ENCODE measurements at regions of chr21 and their contacts with region 1.

Region 1: GRCh38 chr21:46323227-46324128 is at the start of gene C21orf58:
- DNase-seq: peak; percentile 99
- ATAC-seq: peak; percentile 83 to 93 (median 83)
- H3K4me3 ChIP-seq: peak within 1 kb of the TSS; percentile 100
- H3K4me3 Mint-ChIP-seq: peak within 1 kb of the TSS; percentile 97
- H3K27ac ChIP-seq: peak within 1 kb of the TSS; percentile 100
- H3K27ac Mint-ChIP-seq: peak within 1 kb of the TSS; percentile 92 to 96
- H3K4me1 ChIP-seq: peaks cover 20% of the 10 kb centered on the region
- H3K4me1 Mint-ChIP-seq: peaks cover 24 to 27% of the 10 kb centered on the region in 2 donors
- H3K27me3 ChIP-seq: no peaks in the 10 kb centered on the region
- H3K27me3 Mint-ChIP-seq: no peaks in the 10 kb centered on the region
- CTCF ChIP-seq: no peak
- total RNA-seq, gene C21orf58: 4.0 to 8.9 (median 5.2) TPM

Region 2: DNA sequence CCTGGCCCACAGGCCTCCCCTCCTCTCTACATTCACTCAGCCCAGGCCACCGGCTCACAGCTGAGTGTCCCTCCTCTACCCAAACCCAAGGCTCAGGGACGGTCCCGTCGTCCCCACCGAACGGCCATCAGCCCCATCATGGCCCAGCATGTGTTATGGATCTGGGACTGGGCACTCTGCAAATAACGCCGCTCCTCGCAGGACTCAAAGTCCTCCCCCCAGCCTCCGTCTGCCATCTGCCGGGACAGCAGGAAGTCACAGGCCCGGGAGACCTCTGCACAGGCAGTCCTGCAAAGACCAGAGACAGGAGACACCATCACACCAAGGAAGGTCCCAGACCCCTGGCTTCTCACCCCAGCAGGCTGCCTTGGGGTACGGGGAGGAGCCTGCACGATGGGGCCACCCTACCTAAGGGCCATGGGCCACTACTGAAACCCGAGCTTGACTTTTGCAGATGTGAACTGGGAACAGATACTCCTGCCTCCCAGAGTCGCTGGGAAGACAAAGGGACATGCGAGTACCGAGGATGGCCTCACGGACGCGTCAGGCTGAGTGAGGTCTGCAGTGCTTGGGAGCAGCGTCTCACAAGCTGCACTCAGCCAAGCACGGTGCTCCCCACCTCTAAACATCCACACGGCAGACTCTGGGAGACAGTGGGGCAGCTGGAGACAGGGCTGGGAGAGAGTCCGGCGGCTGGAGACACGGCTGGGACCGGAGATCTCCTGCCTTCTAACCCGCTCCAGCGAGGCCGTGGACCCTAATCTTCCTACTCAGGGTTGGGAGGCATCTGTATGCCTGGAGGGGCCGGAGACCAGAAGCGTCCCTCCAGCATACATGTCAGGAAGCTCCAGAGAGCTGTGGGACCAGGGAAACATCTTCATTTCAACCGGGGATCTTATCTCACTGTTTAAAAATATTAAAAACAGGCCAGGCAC is 128.8 kb before region 1 on chr21:
- intact Hi-C with region 1: no loop called
- DNase-seq: no peak
- ATAC-seq: no peak
- H3K4me3 ChIP-seq: no peak overlapping the region
- H3K4me3 Mint-ChIP-seq: no peak overlapping the region
- H3K27ac ChIP-seq: no peak overlapping the region
- H3K27ac Mint-ChIP-seq: no peak overlapping the region
- H3K4me1 ChIP-seq: no peaks in the 10 kb centered on the region
- H3K4me1 Mint-ChIP-seq: peaks cover 4 to 11% of the 10 kb centered on the region in 2 donors
- H3K27me3 ChIP-seq: no peaks in the 10 kb centered on the region
- H3K27me3 Mint-ChIP-seq: no peaks in the 10 kb centered on the region
- CTCF ChIP-seq: no peak

Region 3: DNA sequence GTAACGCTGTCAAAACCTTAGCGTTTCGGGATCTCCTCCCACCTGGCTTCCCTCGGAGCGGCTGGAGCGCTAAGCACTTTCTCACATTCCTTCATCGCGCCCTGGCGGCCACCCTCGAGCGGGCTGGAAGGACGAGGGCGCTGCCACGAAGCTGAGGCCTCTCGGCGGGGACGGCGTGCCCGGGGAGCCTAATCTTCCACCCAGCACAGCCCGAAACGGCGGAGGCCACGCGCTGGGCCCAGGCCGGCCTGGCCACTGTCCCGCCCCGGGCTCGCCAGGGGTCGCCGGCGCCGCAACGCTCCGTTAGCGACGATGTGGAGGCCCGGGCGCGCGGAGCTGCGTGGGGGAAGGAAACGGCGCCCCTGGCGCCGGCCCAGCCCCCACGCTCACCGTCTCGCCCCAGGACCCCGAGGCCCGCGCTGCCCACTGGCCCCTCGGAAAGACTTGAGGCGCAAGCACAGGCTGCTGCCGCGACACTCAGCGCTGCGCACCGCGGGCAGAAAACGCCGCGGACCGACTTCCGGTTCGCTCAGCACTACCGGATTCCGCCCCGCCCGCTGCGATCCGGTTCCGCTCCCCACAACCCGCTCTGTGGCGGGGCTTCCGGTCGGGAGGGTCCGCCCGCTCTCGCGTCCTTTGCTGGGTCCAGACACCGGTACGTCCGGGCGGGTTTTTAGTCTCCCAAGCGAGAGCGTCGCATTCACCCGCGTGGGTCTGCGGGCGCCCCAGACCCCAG is 37.5 kb before region 1 on chr21 and contains the start of gene YBEY:
- intact Hi-C with region 1: loop called (anchors 2 kb)
- DNase-seq: peak; percentile 76 to 92
- ATAC-seq: peak; percentile 86 to 94 (median 88)
- H3K4me3 ChIP-seq: peak within 1 kb of the TSS; percentile 76
- H3K4me3 Mint-ChIP-seq: peak within 1 kb of the TSS; percentile 99
- H3K27ac ChIP-seq: peak within 1 kb of the TSS; percentile 74
- H3K27ac Mint-ChIP-seq: peak within 1 kb of the TSS; percentile 90 to 92
- H3K4me1 ChIP-seq: peaks cover 47% of the 10 kb centered on the region
- H3K4me1 Mint-ChIP-seq: peaks cover 32 to 50% of the 10 kb centered on the region in 2 donors
- H3K27me3 ChIP-seq: no peaks in the 10 kb centered on the region
- H3K27me3 Mint-ChIP-seq: no peaks in the 10 kb centered on the region
- CTCF ChIP-seq: peak; percentile 21
- total RNA-seq, gene YBEY: 10.8 to 13.7 (median 12.7) TPM

Region 4: DNA sequence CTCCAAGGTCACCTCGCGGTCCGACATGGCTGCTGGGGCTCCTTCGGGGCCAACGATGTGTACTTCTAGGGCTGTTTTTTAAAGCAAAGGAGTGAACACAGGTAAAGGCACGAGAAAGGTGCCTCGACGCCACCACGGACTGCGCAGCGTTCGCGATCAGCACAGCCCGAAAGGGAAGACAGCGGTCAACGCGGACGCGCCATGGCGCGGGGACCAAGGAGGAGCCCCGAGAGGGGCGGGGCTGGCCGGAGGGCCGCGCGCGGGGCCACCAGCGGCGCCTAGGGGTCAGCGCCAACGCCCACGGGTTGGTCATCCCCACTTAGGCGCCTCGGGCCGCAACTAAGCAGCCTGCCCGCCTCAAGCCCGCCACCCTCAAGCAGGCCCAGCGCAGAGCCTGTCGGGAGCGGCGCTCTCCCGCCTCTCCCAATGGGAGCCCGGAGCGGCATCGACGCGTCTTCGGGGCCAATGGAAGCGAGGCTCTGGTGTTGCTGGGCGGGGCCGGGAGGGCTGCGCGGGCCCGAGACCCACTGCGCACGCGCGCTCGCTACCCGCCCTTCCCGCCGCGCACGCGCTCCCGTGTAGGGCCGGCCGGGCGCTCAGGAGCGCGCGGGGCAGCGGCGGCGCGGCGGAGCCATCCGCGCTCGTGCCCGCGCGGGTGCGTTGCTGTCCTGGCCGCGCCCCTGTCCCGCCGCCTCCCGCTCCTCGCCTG is 135.0 kb after region 1 on chr21 and contains the start of gene DIP2A:
- intact Hi-C with region 1: loop called (anchors 10 kb)
- DNase-seq: peak; percentile 95 to 99
- ATAC-seq: peak; percentile 95 to 99 (median 97)
- H3K4me3 ChIP-seq: peak within 1 kb of the TSS; percentile 89
- H3K4me3 Mint-ChIP-seq: peak within 1 kb of the TSS; percentile 93
- H3K27ac ChIP-seq: peak within 1 kb of the TSS; percentile 87
- H3K27ac Mint-ChIP-seq: peak within 1 kb of the TSS; percentile 92
- H3K4me1 ChIP-seq: peaks cover 28% of the 10 kb centered on the region
- H3K4me1 Mint-ChIP-seq: peaks cover 46 to 63% of the 10 kb centered on the region in 2 donors
- H3K27me3 ChIP-seq: no peaks in the 10 kb centered on the region
- H3K27me3 Mint-ChIP-seq: no peaks in the 10 kb centered on the region
- CTCF ChIP-seq: no peak
- total RNA-seq, gene DIP2A: 166 to 308 (median 170) TPM

Measured in natural killer cell (primary cell).